ENCODE measurements at regions of chr6 and their contacts with region 1.

Region 1: DNA sequence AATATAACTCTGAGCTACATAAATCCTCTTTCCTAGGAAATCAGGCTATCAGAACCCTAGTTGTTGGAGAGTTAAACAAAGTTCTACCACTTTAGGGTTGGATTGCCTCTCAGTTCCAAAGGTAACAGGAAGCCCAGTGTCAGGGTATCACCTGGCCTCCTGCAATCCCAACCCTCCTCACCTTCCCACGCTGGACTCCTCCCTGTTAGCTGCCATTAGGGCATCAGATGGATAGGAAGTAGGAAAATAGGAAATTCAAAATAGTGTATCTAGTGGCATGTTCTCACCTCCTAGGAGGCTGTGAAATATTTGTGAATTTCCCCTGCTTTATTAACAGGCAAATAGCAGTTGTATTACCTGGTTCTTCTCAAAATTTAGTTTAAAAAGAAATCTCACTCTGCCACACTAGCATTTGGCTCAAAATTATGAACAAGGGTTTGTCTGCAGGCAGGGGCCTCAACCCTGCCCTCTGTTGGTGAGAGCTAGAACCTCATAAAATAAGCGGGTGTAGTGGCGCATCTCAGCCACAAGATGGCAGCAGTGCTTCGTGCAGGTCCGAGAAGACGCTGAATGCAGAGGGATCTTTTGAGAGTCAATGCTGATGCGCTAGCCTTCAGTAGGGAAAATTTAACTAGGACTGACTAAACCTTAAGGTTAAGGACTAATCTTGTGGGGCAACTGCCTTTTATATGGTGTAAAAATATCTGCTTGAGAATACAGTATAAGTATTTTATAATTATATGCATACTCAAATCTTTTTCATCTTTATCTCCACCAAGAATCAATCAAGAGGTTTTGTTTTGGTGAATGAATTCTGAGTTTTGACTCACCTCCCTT is 209.8 kb upstream of the KCNQ5 start:
- DNase-seq: peak; percentile 83
- H3K4me3 ChIP-seq: no peak overlapping the region
- H3K27ac ChIP-seq: no peak overlapping the region
- H3K4me1 ChIP-seq: peaks cover 19% of the 10 kb centered on the region
- H3K27me3 ChIP-seq: no peaks in the 10 kb centered on the region

Region 2: GRCh38 chr6:71698703-71699102 is 713.4 kb before region 1 on chr6:
- in situ Hi-C with region 1: no loop called
- DNase-seq: no peak
- H3K4me3 ChIP-seq: no peak overlapping the region
- H3K27ac ChIP-seq: no peak overlapping the region
- H3K4me1 ChIP-seq: no peaks in the 10 kb centered on the region
- H3K27me3 ChIP-seq: no peaks in the 10 kb centered on the region

Region 3: GRCh38 chr6:72580281-72580940 is 168.3 kb after region 1 on chr6:
- in situ Hi-C with region 1: loop called (anchors 10 kb)
- DNase-seq: peak; percentile 90
- H3K4me3 ChIP-seq: peak overlapping the region; percentile 6; the same call in 1 of the 2 replicates
- H3K27ac ChIP-seq: 0 out of 2 replicates have a peak overlapping the region, but pooled peaks have one; percentile 2
- H3K4me1 ChIP-seq: peaks cover 20% of the 10 kb centered on the region
- H3K27me3 ChIP-seq: no peaks in the 10 kb centered on the region

Region 4: DNA sequence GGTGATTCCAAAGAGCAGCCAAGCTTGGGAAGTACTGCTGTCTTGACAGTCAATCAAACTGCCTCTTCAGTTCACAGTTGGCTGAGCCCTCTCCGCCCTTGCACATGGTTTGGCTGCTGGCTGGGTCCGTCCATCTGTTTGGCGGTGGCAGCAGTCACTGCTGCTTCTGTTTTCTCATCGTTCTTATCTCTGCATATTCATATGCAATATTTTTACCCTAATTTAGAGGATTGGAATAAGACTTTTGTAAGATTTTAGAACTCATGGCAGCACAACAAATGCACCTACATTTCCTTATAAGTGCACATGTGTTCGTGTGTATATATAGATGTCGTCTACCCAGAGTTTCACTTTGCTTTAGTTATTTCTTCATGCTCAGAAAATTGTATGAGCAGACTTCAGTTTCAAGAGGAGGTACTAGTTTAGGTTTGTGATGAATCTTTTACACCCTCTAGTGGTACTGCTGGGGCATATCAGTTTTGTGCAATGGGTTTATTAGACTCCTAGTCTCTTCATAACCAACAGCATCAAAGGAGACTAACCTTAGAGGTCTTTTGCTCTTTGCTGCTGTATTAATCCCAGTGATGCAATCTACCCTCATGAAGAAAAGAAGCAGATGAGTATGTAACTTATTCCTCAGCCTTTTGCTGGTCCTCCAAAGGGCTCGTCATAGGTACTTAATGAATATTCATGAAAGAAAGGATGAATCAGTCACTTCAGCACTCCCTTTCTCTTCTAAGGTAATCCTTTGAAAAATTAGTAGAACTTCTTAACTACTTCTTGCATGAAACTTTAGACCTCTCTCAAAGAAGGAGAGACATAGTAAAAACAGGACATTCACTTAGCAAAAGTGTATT is 768.9 kb after region 1 on chr6:
- in situ Hi-C with region 1: loop called (anchors 10 kb)
- DNase-seq: peak; percentile 82
- H3K4me3 ChIP-seq: peak overlapping the region; percentile 72
- H3K27ac ChIP-seq: peak overlapping the region; percentile 61
- H3K4me1 ChIP-seq: peaks cover 12% of the 10 kb centered on the region
- H3K27me3 ChIP-seq: no peaks in the 10 kb centered on the region

Measured in GM23248 (cell line).